Activated T-helper 1 cell treated with anti-CD3 and anti-CD28 coated beads, Interleukin-12 subunit alpha, Interleukin-12 subunit beta, Interleukin-2, Interleukin-4 antibody, amounts not matched to agents 30 ng/mL and 10 ng/mL and 1 ng/mL, durations not matched to agents 14 hours and 24 hours and 36 hours (primary cell): ENCODE measurements at regions of chr21 and their contacts with region 1.

Region 1: GRCh38 chr21:29372063-29372802 is 73.5 kb downstream of the BACH1 start:
- DNase-seq: peak; percentile 39
- H3K4me3 Mint-ChIP-seq: no peak overlapping the region
- H3K27ac Mint-ChIP-seq: no peak overlapping the region
- H3K4me1 Mint-ChIP-seq: peaks cover 30% of the 10 kb centered on the region
- H3K27me3 Mint-ChIP-seq: no peaks in the 10 kb centered on the region

Region 2: DNA sequence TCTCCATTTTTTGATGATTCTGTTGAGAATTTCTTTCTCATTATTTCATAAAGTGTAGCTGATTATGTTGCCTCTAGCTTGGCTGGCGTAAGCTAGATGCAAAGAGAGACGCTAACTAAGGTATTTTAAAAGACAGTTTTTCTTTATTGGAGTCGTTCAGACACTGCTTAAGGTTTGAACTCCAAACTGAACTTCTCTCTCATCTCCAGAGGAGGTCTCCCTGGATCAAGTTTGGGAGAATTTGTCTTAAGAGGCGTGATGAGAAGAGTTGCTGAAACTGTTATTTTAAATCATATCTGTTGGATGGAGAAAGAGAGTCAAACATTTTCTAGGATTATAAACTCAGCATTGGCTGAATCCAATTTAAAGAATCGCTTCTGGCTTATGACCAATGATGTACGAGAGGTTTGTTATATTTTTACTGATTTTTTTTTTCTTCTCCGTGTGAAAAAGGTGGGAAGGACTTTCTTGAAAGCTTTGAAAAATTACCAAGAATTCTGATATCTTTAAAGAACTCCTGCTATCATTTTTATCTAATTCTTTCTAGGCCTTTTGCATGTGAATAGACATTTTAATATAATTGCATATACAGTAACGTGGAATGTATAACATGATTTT is 207.8 kb before region 1 on chr21:
- intact Hi-C with region 1: loop called (anchors 1 kb)
- DNase-seq: no peak
- H3K4me3 Mint-ChIP-seq: no peak overlapping the region
- H3K27ac Mint-ChIP-seq: no peak overlapping the region
- H3K4me1 Mint-ChIP-seq: peaks cover 7% of the 10 kb centered on the region
- H3K27me3 Mint-ChIP-seq: peaks cover 6% of the 10 kb centered on the region

Region 3: DNA sequence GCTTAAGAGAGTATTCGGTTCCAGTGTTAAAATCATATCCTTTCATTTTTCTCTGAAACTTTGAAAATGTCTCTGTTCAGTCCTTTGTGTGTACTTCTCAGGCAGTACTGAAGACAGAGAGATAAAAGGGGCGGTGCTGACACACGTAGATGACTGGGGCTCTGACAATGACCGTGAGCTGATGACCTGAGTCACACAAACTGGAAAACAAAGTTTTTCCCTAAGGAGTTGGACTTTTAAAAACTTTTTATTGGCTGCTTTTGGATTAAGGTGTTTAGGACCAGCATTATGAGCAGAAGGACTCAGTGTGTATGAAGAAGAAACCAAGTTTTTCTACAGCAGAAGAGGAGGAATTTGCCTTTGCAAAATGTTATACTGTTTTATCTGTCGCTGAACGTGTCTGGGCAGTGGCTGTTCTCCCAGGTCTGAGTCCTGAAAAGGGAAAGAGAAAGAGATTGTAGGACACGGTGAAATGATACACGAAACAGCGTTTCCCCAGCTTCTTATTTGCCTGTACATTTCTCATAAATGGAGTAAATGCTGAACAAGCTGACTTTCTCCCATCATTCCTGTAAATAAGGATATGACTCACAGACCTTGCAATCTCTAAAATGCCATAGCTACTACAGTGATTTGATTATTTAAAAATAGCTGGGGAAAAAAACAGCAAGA is 190.3 kb before region 1 on chr21:
- intact Hi-C with region 1: loop called (anchors 5 kb)
- DNase-seq: no peak
- H3K4me3 Mint-ChIP-seq: peak overlapping the region; percentile 51
- H3K27ac Mint-ChIP-seq: peak overlapping the region; percentile 57
- H3K4me1 Mint-ChIP-seq: peaks cover 27% of the 10 kb centered on the region
- H3K27me3 Mint-ChIP-seq: no peaks in the 10 kb centered on the region

Region 4: GRCh38 chr21:29232601-29233546 is 139.4 kb before region 1 on chr21:
- intact Hi-C with region 1: loop called (anchors 1 kb)
- DNase-seq: no peak
- H3K4me3 Mint-ChIP-seq: no peak overlapping the region
- H3K27ac Mint-ChIP-seq: no peak overlapping the region
- H3K4me1 Mint-ChIP-seq: peaks cover 51% of the 10 kb centered on the region
- H3K27me3 Mint-ChIP-seq: peaks cover 30% of the 10 kb centered on the region

Region 5: GRCh38 chr21:29343519-29343918 is 28.7 kb before region 1 on chr21:
- intact Hi-C with region 1: loop called (anchors 1 kb)
- DNase-seq: no peak
- H3K4me3 Mint-ChIP-seq: no peak overlapping the region
- H3K27ac Mint-ChIP-seq: no peak overlapping the region
- H3K4me1 Mint-ChIP-seq: peaks cover 32% of the 10 kb centered on the region
- H3K27me3 Mint-ChIP-seq: no peaks in the 10 kb centered on the region

Region 6: GRCh38 chr21:29384683-29385322 is 12.6 kb after region 1 on chr21:
- intact Hi-C with region 1: no loop called
- DNase-seq: no peak
- H3K4me3 Mint-ChIP-seq: no peak overlapping the region
- H3K27ac Mint-ChIP-seq: no peak overlapping the region
- H3K4me1 Mint-ChIP-seq: no peaks in the 10 kb centered on the region
- H3K27me3 Mint-ChIP-seq: no peaks in the 10 kb centered on the region

Region 7: DNA sequence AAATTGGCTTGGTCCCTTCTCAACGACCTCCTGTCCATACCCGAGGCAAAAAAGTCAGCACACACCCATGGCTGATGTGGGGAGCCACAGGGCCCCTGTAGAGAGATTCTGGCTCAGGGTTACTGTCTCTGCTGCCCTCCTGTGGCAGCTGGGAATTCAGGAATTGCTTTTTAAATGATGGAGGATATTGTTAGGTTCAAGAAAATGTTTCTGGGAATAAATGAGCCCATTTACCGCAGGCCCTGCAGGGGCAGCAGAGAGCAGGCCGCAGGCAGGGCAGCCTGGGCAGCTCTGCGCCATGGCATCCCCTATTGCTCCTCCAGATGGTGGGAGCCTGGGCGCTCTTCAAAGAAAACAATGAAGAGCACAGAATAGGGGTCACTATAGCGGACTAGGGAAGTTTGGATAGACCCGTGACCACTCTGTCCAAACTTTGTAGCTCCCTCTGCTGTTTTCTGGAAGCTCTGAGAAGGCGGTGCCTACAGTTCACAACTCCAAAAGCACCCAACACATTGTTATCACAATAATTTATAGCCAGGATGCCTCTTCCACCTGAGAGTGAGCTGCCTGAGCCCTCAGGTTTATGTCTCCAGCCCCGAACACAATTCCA is 127.6 kb after region 1 on chr21:
- intact Hi-C with region 1: no loop called
- DNase-seq: no peak
- H3K4me3 Mint-ChIP-seq: no peak overlapping the region
- H3K27ac Mint-ChIP-seq: no peak overlapping the region
- H3K4me1 Mint-ChIP-seq: no peaks in the 10 kb centered on the region
- H3K27me3 Mint-ChIP-seq: no peaks in the 10 kb centered on the region